ENCODE measurements at regions of chr7 and their contacts with region 1.

Region 1: GRCh38 chr7:41696314-41696916 is 6.5 kb downstream of the INHBA start:
- DNase-seq: peak; percentile 94
- H3K4me3 ChIP-seq: peak overlapping the region; percentile 24 to 94 (median 31)
- H3K27ac ChIP-seq: peak overlapping the region; percentile 98
- H3K4me1 ChIP-seq: peaks cover 53% of the 10 kb centered on the region
- H3K27me3 ChIP-seq: no peaks in the 10 kb centered on the region
- CTCF ChIP-seq: peak; percentile 76 to 87
- POLR2A ChIP-seq: peak; percentile 49

Region 2: GRCh38 chr7:41045556-41046123 is 650.8 kb before region 1 on chr7:
- CTCF ChIA-PET with region 1: interaction called, 4 read pairs
- POLR2A ChIA-PET with region 1: no interaction called
- dilution Hi-C with region 1: no loop called
- intact Hi-C with region 1: loop called (anchors 2 kb)
- DNase-seq: peak; percentile 18
- H3K4me3 ChIP-seq: no peak overlapping the region
- H3K27ac ChIP-seq: no peak overlapping the region
- H3K4me1 ChIP-seq: no peaks in the 10 kb centered on the region
- H3K27me3 ChIP-seq: no peaks in the 10 kb centered on the region
- CTCF ChIP-seq: peak in 1 of 2 donors; percentile 23
- POLR2A ChIP-seq: no peak

Region 3: DNA sequence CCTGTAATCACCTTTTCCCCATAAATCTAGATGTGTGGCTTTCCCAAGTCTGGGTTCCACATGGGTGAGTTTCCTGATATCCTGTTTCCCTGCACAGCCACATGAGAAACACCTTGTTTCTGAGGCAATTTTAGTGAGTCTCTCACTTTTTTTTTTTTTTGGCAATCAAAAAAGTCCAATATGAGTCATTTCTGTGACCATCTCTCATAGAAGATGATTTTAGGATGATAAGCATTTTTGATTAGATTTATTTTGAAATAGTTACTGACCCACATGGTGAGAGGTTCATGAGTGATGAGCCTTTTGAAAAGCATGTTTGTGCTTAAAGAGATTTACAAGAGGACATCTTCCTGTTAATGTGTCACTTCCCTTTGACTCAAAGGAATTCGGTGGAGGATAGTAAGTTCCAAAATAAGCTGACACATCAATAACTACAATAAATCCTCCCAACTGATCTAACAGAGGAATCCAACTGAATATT is 457.5 kb before region 1 on chr7:
- CTCF ChIA-PET with region 1: no interaction called
- POLR2A ChIA-PET with region 1: no interaction called
- dilution Hi-C with region 1: no loop called
- intact Hi-C with region 1: loop called (anchors 5 kb)
- DNase-seq: peak; percentile 34
- H3K4me3 ChIP-seq: no peak overlapping the region
- H3K27ac ChIP-seq: no peak overlapping the region
- H3K4me1 ChIP-seq: peaks cover 15% of the 10 kb centered on the region
- H3K27me3 ChIP-seq: no peaks in the 10 kb centered on the region
- CTCF ChIP-seq: no peak
- POLR2A ChIP-seq: no peak

Region 4: DNA sequence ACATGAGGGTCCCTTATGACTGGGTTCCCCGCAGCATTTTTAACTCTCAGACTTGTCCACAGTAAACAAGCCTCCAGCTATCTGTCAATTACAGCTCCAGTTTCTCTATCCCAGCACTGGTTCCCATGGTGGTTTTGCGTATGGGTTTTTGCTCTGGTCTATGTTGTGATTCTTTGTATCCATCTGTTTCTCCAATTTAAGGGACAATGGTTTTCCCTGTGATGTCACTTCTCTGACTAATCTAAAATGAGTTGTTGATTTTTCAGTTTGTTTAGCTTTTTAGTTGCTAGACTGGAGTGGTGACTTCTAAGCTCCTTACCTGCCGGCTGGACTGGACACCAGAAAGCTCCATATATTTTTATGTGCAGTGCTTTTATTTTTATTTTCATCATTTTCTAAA is 297.2 kb before region 1 on chr7:
- CTCF ChIA-PET with region 1: interaction called, 3 read pairs
- POLR2A ChIA-PET with region 1: no interaction called
- dilution Hi-C with region 1: no loop called
- intact Hi-C with region 1: loop called (anchors 10 kb)
- DNase-seq: no peak
- H3K4me3 ChIP-seq: no peak overlapping the region
- H3K27ac ChIP-seq: no peak overlapping the region
- H3K4me1 ChIP-seq: no peaks in the 10 kb centered on the region
- H3K27me3 ChIP-seq: no peaks in the 10 kb centered on the region
- CTCF ChIP-seq: no peak
- POLR2A ChIP-seq: no peak

Region 5: DNA sequence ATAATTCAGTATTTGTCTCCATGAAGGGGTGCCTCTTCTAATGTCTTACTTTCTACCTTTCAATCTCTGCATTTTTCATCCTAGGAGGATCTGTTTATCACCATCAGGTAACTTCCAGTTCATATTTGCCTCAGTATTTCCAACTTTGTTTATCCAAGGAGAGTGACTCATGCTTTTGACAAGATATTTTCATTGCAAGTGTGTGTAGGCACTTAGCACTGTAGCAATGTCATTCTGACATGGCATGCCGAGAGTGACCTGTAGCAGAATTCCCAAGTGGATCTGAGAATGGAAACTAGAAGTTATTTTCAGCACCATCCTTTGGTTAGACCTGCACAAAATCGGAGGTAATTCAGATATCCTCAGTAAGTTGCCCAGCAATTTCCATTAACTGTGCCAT is 123.4 kb before region 1 on chr7:
- CTCF ChIA-PET with region 1: interaction called, 12 read pairs
- POLR2A ChIA-PET with region 1: no interaction called
- dilution Hi-C with region 1: no loop called
- intact Hi-C with region 1: loop called (anchors 1 kb)
- DNase-seq: peak; percentile 84
- H3K4me3 ChIP-seq: no peak overlapping the region
- H3K27ac ChIP-seq: peak overlapping the region; percentile 96
- H3K4me1 ChIP-seq: peaks cover 48% of the 10 kb centered on the region
- H3K27me3 ChIP-seq: no peaks in the 10 kb centered on the region
- CTCF ChIP-seq: no peak
- POLR2A ChIP-seq: peak; percentile 33

Region 6: GRCh38 chr7:41685684-41686083 is 10.7 kb before region 1 on chr7:
- CTCF ChIA-PET with region 1: interaction called, 7 read pairs
- POLR2A ChIA-PET with region 1: no interaction called
- dilution Hi-C with region 1: no loop called
- intact Hi-C with region 1: loop called (anchors 1 kb)
- DNase-seq: peak; percentile 76
- H3K4me3 ChIP-seq: no peak overlapping the region
- H3K27ac ChIP-seq: peak overlapping the region; percentile 35
- H3K4me1 ChIP-seq: peaks cover 24% of the 10 kb centered on the region
- H3K27me3 ChIP-seq: no peaks in the 10 kb centered on the region
- CTCF ChIP-seq: no peak
- POLR2A ChIP-seq: no peak